H1 (cell line): ENCODE measurements at regions of chr11 and their contacts with region 1.

Region 1: DNA sequence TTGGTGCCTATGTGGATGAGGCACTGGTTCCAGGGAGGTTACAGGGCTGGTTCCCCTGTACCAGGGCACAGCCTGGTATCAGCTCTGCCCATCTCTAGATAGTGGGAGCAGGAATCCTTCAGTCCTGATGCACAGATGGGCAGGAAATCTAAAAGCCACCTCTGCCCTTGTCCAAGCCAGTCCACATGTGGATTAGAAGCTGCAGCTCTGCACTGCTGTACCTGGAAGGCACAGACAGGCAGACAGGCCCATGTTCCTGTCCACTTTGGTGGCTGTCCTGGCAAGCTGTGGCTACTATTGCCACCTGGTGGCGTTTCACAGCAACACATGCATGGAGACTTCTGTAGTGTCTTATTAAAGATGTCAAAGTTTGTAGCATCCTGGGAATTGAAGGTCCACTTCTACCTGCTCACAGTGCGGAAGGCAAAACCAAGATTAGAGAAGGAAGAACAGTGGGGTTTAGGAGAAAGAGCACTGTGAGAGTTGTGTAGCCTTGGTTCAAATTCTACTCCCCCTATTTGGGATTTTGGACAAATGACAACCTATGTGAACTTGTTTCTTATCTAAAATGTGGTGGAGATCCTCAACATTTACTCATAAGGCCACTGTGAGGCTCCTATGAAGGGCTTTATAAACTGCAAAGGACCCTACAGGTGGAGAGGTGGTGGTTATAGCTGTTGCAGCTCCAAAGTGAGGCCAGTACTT is 30.1 kb downstream of the NAV2 start:
- DNase-seq: peak; percentile 49 to 84
- H3K4me3 ChIP-seq: no peak overlapping the region
- H3K27ac ChIP-seq: no peak overlapping the region
- H3K4me1 ChIP-seq: peaks cover 0 to 12% (median 3%) of the 10 kb centered on the region in 4 experiments; a peak in 2 of 7 replicates
- H3K27me3 ChIP-seq: no peaks in the 10 kb centered on the region
- CTCF ChIP-seq: peak; percentile 76 to 97 (median 91)
- EP300 ChIP-seq: no peak
- POLR2A ChIP-seq: no peak
- RAD21 ChIP-seq: peak; percentile 93 to 97

Region 2: DNA sequence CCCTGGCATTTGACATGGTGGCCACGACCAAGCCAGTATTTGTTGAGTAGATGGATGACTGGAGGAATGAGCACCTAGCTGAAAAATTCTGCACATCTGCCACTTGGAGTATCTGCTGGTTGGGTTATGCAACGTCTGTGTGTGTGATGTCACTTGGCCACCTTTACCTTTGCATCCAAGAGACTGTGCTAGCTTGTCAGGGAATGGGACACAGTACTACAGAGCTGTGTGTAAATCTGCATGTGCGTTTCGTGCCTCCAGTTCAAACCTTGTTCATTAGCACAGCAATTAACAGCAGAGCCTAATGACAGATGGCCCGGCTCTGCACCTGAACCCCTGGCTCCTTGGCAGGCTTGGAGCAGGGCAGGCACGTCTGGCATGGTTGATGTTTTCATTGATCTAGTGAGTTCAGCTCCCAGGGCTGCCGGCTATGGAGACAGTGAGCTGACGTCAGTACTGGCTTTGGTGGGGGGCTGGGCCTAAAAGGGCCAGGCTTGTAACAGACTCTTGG is 218.5 kb before region 1 on chr11:
- CTCF ChIA-PET with region 1: no interaction called
- POLR2A ChIA-PET with region 1: no interaction called
- DNase-seq: no peak
- H3K4me3 ChIP-seq: no peak overlapping the region
- H3K27ac ChIP-seq: no peak overlapping the region
- H3K4me1 ChIP-seq: no peaks in the 10 kb centered on the region; a peak in 3 of 7 replicates
- H3K27me3 ChIP-seq: no peaks in the 10 kb centered on the region
- CTCF ChIP-seq: no peak
- EP300 ChIP-seq: no peak
- POLR2A ChIP-seq: no peak
- RAD21 ChIP-seq: no peak

Region 3: DNA sequence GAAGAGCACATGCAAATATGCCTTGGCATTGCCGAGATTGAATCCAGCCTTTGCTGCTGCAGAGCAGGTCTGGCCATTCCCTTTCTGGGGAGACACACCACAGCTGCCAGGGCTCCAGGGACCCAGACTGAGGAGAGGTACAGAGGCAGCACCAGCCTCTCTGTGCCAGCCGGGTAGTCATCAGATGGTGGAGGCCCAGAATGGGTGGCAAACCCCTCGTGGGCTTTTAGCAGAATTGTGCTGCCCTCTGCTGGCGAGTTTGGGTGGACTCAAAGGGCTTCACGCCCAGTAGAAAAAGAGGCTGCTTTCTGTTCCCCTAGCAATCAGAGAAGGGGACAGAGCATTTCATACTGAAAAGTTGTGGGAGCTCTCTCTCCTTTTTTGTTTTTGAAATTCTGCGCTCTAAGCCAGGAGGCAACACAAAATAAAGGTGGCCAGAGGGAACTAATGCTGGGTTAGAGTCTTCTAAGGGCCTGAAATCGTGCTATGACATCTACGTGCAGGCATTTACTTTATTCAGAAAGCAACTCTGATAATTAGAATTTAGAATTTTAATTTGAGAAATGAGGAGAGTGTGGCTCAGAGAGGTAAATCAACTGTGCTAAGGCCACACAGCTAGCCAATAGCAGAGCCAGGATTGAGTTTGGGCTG is 188.9 kb before region 1 on chr11:
- CTCF ChIA-PET with region 1: interaction called, 36 read pairs
- POLR2A ChIA-PET with region 1: no interaction called
- DNase-seq: peak; percentile 44 to 94
- H3K4me3 ChIP-seq: no peak overlapping the region
- H3K27ac ChIP-seq: no peak overlapping the region
- H3K4me1 ChIP-seq: peaks cover 0 to 8% (median 2%) of the 10 kb centered on the region in 4 experiments; a peak in 5 of 7 replicates
- H3K27me3 ChIP-seq: no peaks in the 10 kb centered on the region; a peak in 1 of 7 replicates
- CTCF ChIP-seq: peak; percentile 64 to 91 (median 85)
- EP300 ChIP-seq: no peak
- POLR2A ChIP-seq: no peak
- RAD21 ChIP-seq: peak; percentile 96 to 99

Region 4: GRCh38 chr11:19602406-19602805 is 140.3 kb before region 1 on chr11:
- CTCF ChIA-PET with region 1: interaction called, 10 read pairs
- POLR2A ChIA-PET with region 1: no interaction called
- DNase-seq: no peak
- H3K4me3 ChIP-seq: no peak overlapping the region
- H3K27ac ChIP-seq: no peak overlapping the region
- H3K4me1 ChIP-seq: peaks cover 0 to 7% (median 2%) of the 10 kb centered on the region in 4 experiments; a peak in 3 of 7 replicates
- H3K27me3 ChIP-seq: no peaks in the 10 kb centered on the region
- CTCF ChIP-seq: no peak
- EP300 ChIP-seq: no peak
- POLR2A ChIP-seq: no peak
- RAD21 ChIP-seq: no peak

Region 5: DNA sequence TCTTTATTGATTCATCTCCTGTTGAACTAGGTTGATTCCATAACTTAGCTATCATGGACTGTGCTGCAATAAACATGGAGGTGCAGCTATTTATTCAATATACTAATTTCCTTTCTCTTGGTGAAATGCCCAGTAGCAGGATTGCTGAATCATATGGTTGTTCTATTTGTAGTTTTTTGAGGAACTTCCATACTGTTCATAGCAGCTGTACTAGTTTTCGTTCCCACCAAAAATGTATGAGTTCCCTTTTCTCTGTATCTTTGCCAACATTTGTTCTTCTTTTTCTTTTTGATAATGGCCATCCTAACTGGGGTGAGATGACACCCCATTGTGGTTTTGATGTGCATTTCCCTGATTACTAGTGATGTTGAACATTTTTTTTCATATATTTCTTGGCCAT is 117.3 kb before region 1 on chr11:
- CTCF ChIA-PET with region 1: no interaction called
- POLR2A ChIA-PET with region 1: no interaction called
- DNase-seq: no peak
- H3K4me3 ChIP-seq: no peak overlapping the region
- H3K27ac ChIP-seq: no peak overlapping the region
- H3K4me1 ChIP-seq: no peaks in the 10 kb centered on the region; a peak in 1 of 7 replicates
- H3K27me3 ChIP-seq: no peaks in the 10 kb centered on the region
- CTCF ChIP-seq: no peak
- EP300 ChIP-seq: no peak
- POLR2A ChIP-seq: no peak
- RAD21 ChIP-seq: no peak

Region 6: DNA sequence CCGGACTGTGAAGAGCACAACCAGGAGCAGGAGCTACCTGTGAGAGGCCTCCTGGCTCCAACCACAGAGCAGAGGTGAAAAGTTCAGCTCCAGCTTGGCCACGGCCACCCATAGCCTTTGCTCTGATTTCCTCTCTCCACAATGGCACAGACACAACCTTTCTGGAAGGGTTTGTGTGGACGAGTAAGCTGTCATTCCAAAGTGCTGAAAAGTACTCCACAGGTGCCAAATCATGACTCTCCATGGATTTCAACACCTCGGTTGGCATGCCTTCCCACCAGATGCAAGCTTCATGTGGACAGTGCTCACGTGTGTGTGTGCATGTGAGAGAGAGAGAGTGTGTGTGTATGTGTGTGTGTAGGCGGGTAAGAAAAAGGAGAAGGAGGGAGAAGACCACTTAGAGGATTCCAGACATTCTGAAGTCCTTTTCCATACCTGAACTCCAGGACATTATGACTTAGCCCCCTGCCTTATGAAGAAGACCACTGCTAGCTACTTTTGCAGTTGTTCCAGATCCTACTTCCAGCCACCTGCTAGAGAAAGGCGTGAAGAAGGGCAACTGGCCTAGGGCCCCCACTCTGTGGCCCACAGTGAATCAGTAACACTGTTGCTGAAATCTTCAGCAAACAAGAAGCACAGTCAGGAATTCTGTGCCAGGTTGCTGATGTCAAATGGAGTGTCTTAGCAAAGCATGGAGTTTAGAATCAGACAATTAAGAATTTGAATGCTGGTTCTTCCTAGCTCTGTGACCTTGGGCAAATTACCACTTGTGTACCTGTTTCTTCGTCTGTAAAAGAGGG is 44.0 kb before region 1 on chr11:
- CTCF ChIA-PET with region 1: interaction called, 16 read pairs
- POLR2A ChIA-PET with region 1: no interaction called
- DNase-seq: no peak
- H3K4me3 ChIP-seq: no peak overlapping the region
- H3K27ac ChIP-seq: no peak overlapping the region
- H3K4me1 ChIP-seq: peaks cover 0 to 12% (median 7%) of the 10 kb centered on the region in 4 experiments; a peak in 5 of 7 replicates
- H3K27me3 ChIP-seq: no peaks in the 10 kb centered on the region; a peak in 1 of 7 replicates
- CTCF ChIP-seq: no peak
- EP300 ChIP-seq: no peak
- POLR2A ChIP-seq: no peak
- RAD21 ChIP-seq: no peak

Region 7: DNA sequence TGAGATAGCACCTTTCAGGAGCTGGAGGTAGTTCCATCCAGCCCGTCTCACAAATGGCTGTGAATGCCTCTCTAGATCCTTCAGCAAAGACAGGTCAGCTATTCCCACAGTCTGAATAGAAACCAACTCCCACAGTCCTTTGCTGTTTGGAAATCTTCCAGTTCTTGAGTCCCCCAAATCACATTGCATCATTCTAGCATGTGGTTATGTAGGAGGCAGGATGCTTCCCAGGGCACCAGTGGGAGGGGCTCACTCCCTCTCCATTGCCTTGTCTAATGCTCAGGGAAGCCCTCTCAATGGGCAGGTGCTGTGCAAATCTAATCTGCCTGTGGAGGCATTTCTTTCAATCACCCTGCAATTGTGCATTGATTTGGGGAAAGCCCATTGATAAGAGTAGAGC is 15.5 kb before region 1 on chr11:
- CTCF ChIA-PET with region 1: interaction called, 21 read pairs
- POLR2A ChIA-PET with region 1: no interaction called
- DNase-seq: no peak
- H3K4me3 ChIP-seq: no peak overlapping the region
- H3K27ac ChIP-seq: no peak overlapping the region
- H3K4me1 ChIP-seq: no peaks in the 10 kb centered on the region
- H3K27me3 ChIP-seq: no peaks in the 10 kb centered on the region
- CTCF ChIP-seq: no peak
- EP300 ChIP-seq: no peak
- POLR2A ChIP-seq: no peak
- RAD21 ChIP-seq: no peak

Region 8: GRCh38 chr11:19777377-19778102 is 34.8 kb after region 1 on chr11:
- CTCF ChIA-PET with region 1: interaction called, 25 read pairs
- POLR2A ChIA-PET with region 1: no interaction called
- DNase-seq: no peak
- H3K4me3 ChIP-seq: peak overlapping the region; percentile 84 to 96 (median 90)
- H3K27ac ChIP-seq: peak overlapping the region; percentile 92
- H3K4me1 ChIP-seq: peaks cover 17 to 43% (median 37%) of the 10 kb centered on the region in 4 experiments
- H3K27me3 ChIP-seq: no peaks in the 10 kb centered on the region
- CTCF ChIP-seq: no peak
- EP300 ChIP-seq: peak in 1 of 2 experiments; percentile 7; a peak in 1 of 3 replicates
- POLR2A ChIP-seq: peak; percentile 78 to 81
- RAD21 ChIP-seq: no peak